ENCODE measurements at regions of chr7 and their contacts with region 1.

Region 1: GRCh38 chr7:6577365-6578113 is at the start of gene ZDHHC4:
- DNase-seq: peak; percentile 79
- ATAC-seq: peak; percentile 83
- H3K4me3 Mint-ChIP-seq: peak within 1 kb of the TSS; percentile 85
- H3K27ac Mint-ChIP-seq: peak within 1 kb of the TSS; percentile 92
- H3K4me1 Mint-ChIP-seq: no peaks in the 10 kb centered on the region
- H3K27me3 Mint-ChIP-seq: no peaks in the 10 kb centered on the region
- CTCF ChIP-seq: no peak
- total RNA-seq, gene ZDHHC4: 37.7 to 48.2 TPM (median 46.4 TPM) in 3 replicates

Region 2: GRCh38 chr7:6516387-6516983 is 61.1 kb before region 1 on chr7:
- CTCF ChIA-PET with region 1: interaction called, 18 read pairs
- POLR2A ChIA-PET with region 1: interaction called, 4 read pairs
- DNase-seq: peak; percentile 89
- ATAC-seq: peak; percentile 99
- H3K4me3 Mint-ChIP-seq: peak overlapping the region; percentile 62
- H3K27ac Mint-ChIP-seq: peak overlapping the region; percentile 92
- H3K4me1 Mint-ChIP-seq: peaks cover 7% of the 10 kb centered on the region; the same call in 1 of the 2 replicates
- H3K27me3 Mint-ChIP-seq: no peaks in the 10 kb centered on the region
- CTCF ChIP-seq: peak; percentile 78

Region 3: GRCh38 chr7:6589829-6590644 is 12.5 kb after region 1 on chr7 and contains the start of gene INTS15:
- CTCF ChIA-PET with region 1: interaction called, 27 read pairs
- POLR2A ChIA-PET with region 1: no interaction called
- DNase-seq: peak; percentile 77
- ATAC-seq: peak; percentile 94
- H3K4me3 Mint-ChIP-seq: peak within 1 kb of the TSS; percentile 82
- H3K27ac Mint-ChIP-seq: 0 out of 2 replicates have a peak within 1 kb of the TSS, but pooled peaks have one; percentile 65
- H3K4me1 Mint-ChIP-seq: peaks cover 9% of the 10 kb centered on the region
- H3K27me3 Mint-ChIP-seq: no peaks in the 10 kb centered on the region; the same call in 1 of the 2 replicates
- CTCF ChIP-seq: peak; percentile 78
- total RNA-seq, gene INTS15: 25.6 to 28.2 TPM (median 27.6 TPM) in 3 replicates

Region 4: GRCh38 chr7:6614953-6615722 is 37.6 kb after region 1 on chr7 and contains the start of gene ZNF853:
- CTCF ChIA-PET with region 1: no interaction called
- POLR2A ChIA-PET with region 1: no interaction called
- DNase-seq: peak; percentile 54
- ATAC-seq: peak; percentile 62
- H3K4me3 Mint-ChIP-seq: peak within 1 kb of the TSS; percentile 76
- H3K27ac Mint-ChIP-seq: peak within 1 kb of the TSS; percentile 28
- H3K4me1 Mint-ChIP-seq: peaks cover 12% of the 10 kb centered on the region
- H3K27me3 Mint-ChIP-seq: peaks cover 5% of the 10 kb centered on the region; the same call in 1 of the 2 replicates
- CTCF ChIP-seq: no peak
- total RNA-seq, gene ZNF853: 7.7 to 8.0 TPM (median 8.0 TPM) in 3 replicates

Measured in WTC11 (cell line).